Left ventricle myocardium inferior (tissue), 1 donor: ENCODE measurements at regions of chr16 and their contacts with region 1.

Region 1: GRCh38 chr16:67806428-67807147 is at the starts of genes RANBP10 and TSNAXIP1:
- DNase-seq: peak; percentile 96
- H3K4me3 ChIP-seq: peak within 1 kb of the TSS; percentile 93
- H3K27ac ChIP-seq: peak within 1 kb of the TSS; percentile 90
- H3K4me1 ChIP-seq: peaks cover 32% of the 10 kb centered on the region
- H3K27me3 ChIP-seq: no peaks in the 10 kb centered on the region
- CTCF ChIP-seq: no peak
- total RNA-seq, gene RANBP10: 14.7 TPM
- total RNA-seq, gene TSNAXIP1: 0.49 TPM

Region 2: DNA sequence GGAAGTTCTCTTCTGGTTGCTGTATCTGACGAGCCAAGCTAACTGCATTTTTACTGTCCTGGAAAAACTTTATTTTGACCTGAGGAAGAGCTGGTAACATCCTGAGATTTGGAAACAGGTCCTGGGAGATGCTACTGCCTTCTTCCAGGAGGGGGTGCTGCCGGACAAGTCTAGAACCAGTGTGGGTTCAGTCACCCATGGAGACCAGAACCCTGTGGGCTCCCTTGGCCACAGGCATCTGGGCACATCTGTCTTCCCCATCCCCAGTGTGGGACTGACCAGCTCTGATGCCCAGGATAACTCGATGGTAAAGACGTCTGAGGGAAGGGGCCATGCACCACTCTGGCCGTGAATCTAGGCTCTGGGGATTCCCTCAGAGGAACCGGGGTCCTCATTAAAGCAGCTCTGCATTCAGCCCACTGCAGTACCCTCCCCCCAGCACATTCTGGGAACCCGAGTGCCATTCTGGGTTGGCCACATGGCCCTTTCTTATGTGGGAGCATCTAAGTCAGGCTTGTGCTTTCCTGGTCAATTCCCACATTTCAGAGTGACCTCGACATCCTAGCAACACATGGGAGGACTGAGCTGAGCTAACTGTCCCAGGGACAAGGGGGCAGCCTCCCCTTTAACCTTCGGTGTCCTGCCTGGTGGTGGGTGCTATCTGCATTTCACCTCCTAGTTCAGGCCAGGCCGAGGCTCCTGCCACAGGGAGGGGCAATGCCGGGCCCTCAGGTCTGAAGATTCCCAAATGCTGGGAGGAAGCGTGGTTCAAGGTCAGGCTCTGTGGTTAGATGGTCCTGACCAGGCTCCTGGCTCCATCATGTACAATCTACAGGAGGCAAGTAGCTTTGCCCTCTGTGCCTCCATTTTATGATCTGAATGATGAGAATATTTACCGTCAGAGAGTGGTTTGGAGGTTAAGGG is 133.6 kb before region 1 on chr16:
- intact Hi-C with region 1: loop called (anchors 10 kb)
- DNase-seq: peak; percentile 65
- H3K4me3 ChIP-seq: peak overlapping the region; percentile 23
- H3K27ac ChIP-seq: peak overlapping the region; percentile 87
- H3K4me1 ChIP-seq: peaks cover 37% of the 10 kb centered on the region
- H3K27me3 ChIP-seq: no peaks in the 10 kb centered on the region
- CTCF ChIP-seq: peak; percentile 81

Region 3: GRCh38 chr16:67719778-67720144 is 86.8 kb before region 1 on chr16:
- intact Hi-C with region 1: loop called (anchors 5 kb)
- DNase-seq: no peak
- H3K4me3 ChIP-seq: peak overlapping the region; percentile 100
- H3K27ac ChIP-seq: peak overlapping the region; percentile 96
- H3K4me1 ChIP-seq: peaks cover 34% of the 10 kb centered on the region
- H3K27me3 ChIP-seq: no peaks in the 10 kb centered on the region
- CTCF ChIP-seq: no peak